ENCODE measurements at regions of chr1 and their contacts with region 1.

Region 1: DNA sequence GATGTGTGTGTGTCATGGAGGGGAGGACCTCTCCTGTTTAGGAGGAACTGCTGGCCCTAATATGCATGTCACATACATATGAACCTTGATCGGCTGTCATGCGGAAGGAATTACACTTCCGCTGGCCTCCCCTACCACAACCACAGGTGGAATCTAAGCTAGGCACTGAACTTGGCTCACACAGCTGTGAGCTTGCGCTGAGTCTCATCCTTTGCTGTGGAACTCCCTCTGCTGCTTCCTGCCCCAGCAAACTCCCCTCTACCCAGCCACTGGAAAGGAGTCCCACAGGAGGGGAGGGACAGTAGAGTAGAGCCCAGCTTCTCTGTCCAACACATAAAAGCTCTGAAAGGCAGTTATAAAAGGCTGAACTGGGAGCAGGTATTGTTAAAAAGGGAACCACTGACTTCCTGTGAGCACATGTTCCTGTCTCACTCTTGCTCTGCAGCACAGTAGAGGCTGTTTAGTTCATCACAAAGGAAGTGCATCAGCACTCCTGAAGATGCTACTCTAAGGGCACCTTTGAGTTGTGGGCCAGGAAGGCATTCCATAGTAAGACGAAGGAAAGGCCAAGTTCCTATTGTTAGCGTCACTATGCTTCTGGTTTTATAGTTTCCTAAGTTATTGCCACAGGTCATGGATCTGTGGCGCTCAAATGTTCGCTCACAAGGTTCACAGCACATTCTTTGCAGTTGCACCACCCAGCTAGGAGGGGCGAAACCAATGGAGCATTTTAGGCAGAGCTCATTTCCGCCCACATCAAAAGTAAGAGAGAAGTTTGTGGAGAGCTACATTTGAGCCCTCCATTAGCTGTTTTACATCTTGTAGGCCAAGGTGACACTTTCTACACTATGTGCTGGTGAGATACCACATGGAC is 17.7 kb upstream of the PTPRC start:
- DNase-seq: peak; percentile 67 to 71 (median 70)
- H3K4me3 ChIP-seq: peak overlapping the region in 1 of 3 experiments; percentile 40
- H3K4me3 Mint-ChIP-seq: peak overlapping the region in 1 of 2 donors; percentile 40
- H3K27ac ChIP-seq: peak overlapping the region; percentile 47 to 83
- H3K27ac Mint-ChIP-seq: peak overlapping the region; percentile 80 to 95 (median 91)
- H3K4me1 ChIP-seq: peaks cover 30 to 38% of the 10 kb centered on the region in 2 donors
- H3K4me1 Mint-ChIP-seq: peaks cover 32% of the 10 kb centered on the region
- H3K27me3 ChIP-seq: no peaks in the 10 kb centered on the region
- H3K27me3 Mint-ChIP-seq: peaks cover 0 to 3% (median 0%) of the 10 kb centered on the region in 3 donors
- CTCF ChIP-seq: no peak

Region 2: GRCh38 chr1:198556971-198557370 is 64.2 kb before region 1 on chr1:
- intact Hi-C with region 1: loop called in 1 of 2 experiments (anchors 10 kb)
- DNase-seq: peak; percentile 77 to 81 (median 78)
- H3K4me3 ChIP-seq: peak overlapping the region in 1 of 3 experiments; percentile 27
- H3K4me3 Mint-ChIP-seq: peak overlapping the region in 1 of 2 donors; percentile 61
- H3K27ac ChIP-seq: peak overlapping the region in 1 of 2 donors; percentile 35
- H3K27ac Mint-ChIP-seq: peak overlapping the region; percentile 8 to 70 (median 45)
- H3K4me1 ChIP-seq: peaks cover 30 to 33% of the 10 kb centered on the region in 2 donors
- H3K4me1 Mint-ChIP-seq: peaks cover 44% of the 10 kb centered on the region
- H3K27me3 ChIP-seq: no peaks in the 10 kb centered on the region
- H3K27me3 Mint-ChIP-seq: no peaks in the 10 kb centered on the region
- CTCF ChIP-seq: no peak